CD4-positive, alpha-beta memory T cell (primary cell): ENCODE measurements at regions of chr1 and their contacts with region 1.

Region 1: DNA sequence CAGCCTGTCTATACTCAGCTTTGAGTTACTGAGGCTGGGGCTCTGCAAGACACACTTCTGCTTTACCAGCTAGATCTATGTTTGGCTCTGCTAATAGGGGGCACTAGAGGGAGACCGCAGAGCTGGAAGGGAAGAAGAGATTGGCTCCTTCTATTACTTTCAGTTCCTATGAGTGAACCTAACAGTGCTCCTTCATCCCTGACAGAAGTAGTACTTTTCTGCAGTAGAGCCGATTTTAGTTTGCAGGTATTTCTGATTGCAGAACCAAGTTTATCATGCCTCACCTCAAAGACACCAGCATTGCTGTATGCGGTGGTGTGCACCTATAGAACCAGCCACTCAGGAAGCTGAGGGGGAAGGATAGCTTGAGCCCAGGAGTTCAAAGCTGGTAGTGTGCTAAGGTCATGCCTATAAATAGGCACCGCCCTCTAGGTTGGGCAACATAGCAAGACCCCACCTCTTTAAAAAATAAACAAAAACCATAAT is 5.7 kb upstream of the ZDHHC18 start:
- DNase-seq: peak; percentile 53 to 60 (median 57)
- H3K4me3 ChIP-seq: peak overlapping the region in 1 of 2 donors; percentile 42
- H3K4me3 Mint-ChIP-seq: peak overlapping the region; percentile 79 to 87 (median 84)
- H3K27ac ChIP-seq: peak overlapping the region; percentile 43
- H3K27ac Mint-ChIP-seq: peak overlapping the region; percentile 87 to 94 (median 92)
- H3K4me1 ChIP-seq: peaks cover 25% of the 10 kb centered on the region
- H3K4me1 Mint-ChIP-seq: peaks cover 15 to 36% (median 27%) of the 10 kb centered on the region in 4 donors
- H3K27me3 ChIP-seq: no peaks in the 10 kb centered on the region
- H3K27me3 Mint-ChIP-seq: no peaks in the 10 kb centered on the region

Region 2: GRCh38 chr1:26677306-26678115 is 143.3 kb before region 1 on chr1:
- CTCF ChIA-PET with region 1: no interaction called
- POLR2A ChIA-PET with region 1: no interaction called
- intact Hi-C with region 1: no loop called
- DNase-seq: peak; percentile 48 to 68 (median 54)
- H3K4me3 ChIP-seq: no peak overlapping the region
- H3K4me3 Mint-ChIP-seq: peak overlapping the region in 7 of 8 donors; percentile 36 to 82 (median 77)
- H3K27ac ChIP-seq: peak overlapping the region; percentile 5
- H3K27ac Mint-ChIP-seq: peak overlapping the region; percentile 24 to 89 (median 74)
- H3K4me1 ChIP-seq: peaks cover 20% of the 10 kb centered on the region
- H3K4me1 Mint-ChIP-seq: peaks cover 11 to 23% (median 14%) of the 10 kb centered on the region in 4 donors
- H3K27me3 ChIP-seq: no peaks in the 10 kb centered on the region
- H3K27me3 Mint-ChIP-seq: no peaks in the 10 kb centered on the region

Region 3: GRCh38 chr1:26733982-26734381 is 86.8 kb before region 1 on chr1:
- CTCF ChIA-PET with region 1: no interaction called
- POLR2A ChIA-PET with region 1: no interaction called
- intact Hi-C with region 1: no loop called
- DNase-seq: peak; percentile 15 to 52 (median 21)
- H3K4me3 ChIP-seq: no peak overlapping the region
- H3K4me3 Mint-ChIP-seq: peak overlapping the region in 6 of 8 donors; percentile 26 to 77 (median 56)
- H3K27ac ChIP-seq: peak overlapping the region; percentile 16
- H3K27ac Mint-ChIP-seq: peak overlapping the region; percentile 74 to 87 (median 80)
- H3K4me1 ChIP-seq: peaks cover 45% of the 10 kb centered on the region
- H3K4me1 Mint-ChIP-seq: peaks cover 33 to 61% (median 49%) of the 10 kb centered on the region in 4 donors
- H3K27me3 ChIP-seq: no peaks in the 10 kb centered on the region
- H3K27me3 Mint-ChIP-seq: no peaks in the 10 kb centered on the region

Region 4: GRCh38 chr1:26833432-26834405 is 12.9 kb after region 1 on chr1:
- CTCF ChIA-PET with region 1: interaction called, 184 read pairs
- POLR2A ChIA-PET with region 1: interaction called, 55 read pairs
- intact Hi-C with region 1: loop called (anchors 1 kb)
- DNase-seq: peak; percentile 89 to 98 (median 94)
- H3K4me3 ChIP-seq: peak overlapping the region in 1 of 2 donors; percentile 23
- H3K4me3 Mint-ChIP-seq: peak overlapping the region; percentile 74 to 92 (median 85)
- H3K27ac ChIP-seq: peak overlapping the region; percentile 97
- H3K27ac Mint-ChIP-seq: peak overlapping the region; percentile 98 to 100 (median 100)
- H3K4me1 ChIP-seq: peaks cover 74% of the 10 kb centered on the region
- H3K4me1 Mint-ChIP-seq: peaks cover 60 to 87% (median 73%) of the 10 kb centered on the region in 4 donors
- H3K27me3 ChIP-seq: no peaks in the 10 kb centered on the region
- H3K27me3 Mint-ChIP-seq: no peaks in the 10 kb centered on the region

Region 5: DNA sequence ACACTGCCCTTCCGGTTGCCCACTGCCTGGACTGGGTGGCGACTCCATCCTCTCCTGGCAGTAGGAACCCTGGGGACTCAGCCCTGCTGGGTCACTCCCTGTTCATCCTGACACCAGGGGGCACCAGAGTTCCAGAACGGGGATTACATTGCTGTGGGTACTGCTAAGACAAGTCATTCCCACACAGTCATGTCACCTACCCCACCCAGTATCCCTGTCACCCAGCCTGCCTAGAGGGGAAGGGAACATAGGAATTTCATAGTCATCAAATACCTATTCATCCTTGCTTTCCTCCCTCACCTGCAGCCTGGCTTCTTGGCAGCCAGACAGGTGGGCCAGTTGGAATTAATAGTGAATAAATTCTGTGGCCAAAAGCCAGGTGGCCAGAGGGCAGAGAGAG is 32.3 kb after region 1 on chr1:
- CTCF ChIA-PET with region 1: interaction called, 11 read pairs
- POLR2A ChIA-PET with region 1: no interaction called
- intact Hi-C with region 1: no loop called
- DNase-seq: peak; percentile 64 to 75 (median 69)
- H3K4me3 ChIP-seq: no peak overlapping the region
- H3K4me3 Mint-ChIP-seq: no peak overlapping the region
- H3K27ac ChIP-seq: no peak overlapping the region
- H3K27ac Mint-ChIP-seq: peak overlapping the region in 2 of 7 donors; percentile 11 to 52
- H3K4me1 ChIP-seq: no peaks in the 10 kb centered on the region
- H3K4me1 Mint-ChIP-seq: peaks cover 1 to 9% (median 4%) of the 10 kb centered on the region in 4 donors
- H3K27me3 ChIP-seq: no peaks in the 10 kb centered on the region
- H3K27me3 Mint-ChIP-seq: no peaks in the 10 kb centered on the region

Region 6: GRCh38 chr1:26877326-26877725 is 56.5 kb after region 1 on chr1:
- CTCF ChIA-PET with region 1: interaction called, 10 read pairs
- POLR2A ChIA-PET with region 1: no interaction called
- intact Hi-C with region 1: no loop called
- DNase-seq: no peak
- H3K4me3 ChIP-seq: no peak overlapping the region
- H3K4me3 Mint-ChIP-seq: no peak overlapping the region
- H3K27ac ChIP-seq: no peak overlapping the region
- H3K27ac Mint-ChIP-seq: no peak overlapping the region
- H3K4me1 ChIP-seq: no peaks in the 10 kb centered on the region
- H3K4me1 Mint-ChIP-seq: peaks cover 0 to 1% (median under 1%) of the 10 kb centered on the region in 4 donors
- H3K27me3 ChIP-seq: no peaks in the 10 kb centered on the region
- H3K27me3 Mint-ChIP-seq: no peaks in the 10 kb centered on the region

Region 7: GRCh38 chr1:26900001-26900814 is 79.4 kb after region 1 on chr1 and contains the start of gene GPATCH3:
- CTCF ChIA-PET with region 1: interaction called, 5 read pairs
- POLR2A ChIA-PET with region 1: interaction called, 10 read pairs
- intact Hi-C with region 1: no loop called
- DNase-seq: peak; percentile 87 to 89 (median 88)
- H3K4me3 ChIP-seq: peak within 1 kb of the TSS; percentile 86 to 93
- H3K4me3 Mint-ChIP-seq: peak within 1 kb of the TSS; percentile 87 to 100 (median 96)
- H3K27ac ChIP-seq: peak within 1 kb of the TSS; percentile 90
- H3K27ac Mint-ChIP-seq: peak within 1 kb of the TSS; percentile 92 to 100 (median 98)
- H3K4me1 ChIP-seq: peaks cover 25% of the 10 kb centered on the region
- H3K4me1 Mint-ChIP-seq: peaks cover 21 to 48% (median 26%) of the 10 kb centered on the region in 4 donors
- H3K27me3 ChIP-seq: no peaks in the 10 kb centered on the region
- H3K27me3 Mint-ChIP-seq: no peaks in the 10 kb centered on the region
- total RNA-seq, gene GPATCH3: 25.0 to 26.7 TPM

Region 8: DNA sequence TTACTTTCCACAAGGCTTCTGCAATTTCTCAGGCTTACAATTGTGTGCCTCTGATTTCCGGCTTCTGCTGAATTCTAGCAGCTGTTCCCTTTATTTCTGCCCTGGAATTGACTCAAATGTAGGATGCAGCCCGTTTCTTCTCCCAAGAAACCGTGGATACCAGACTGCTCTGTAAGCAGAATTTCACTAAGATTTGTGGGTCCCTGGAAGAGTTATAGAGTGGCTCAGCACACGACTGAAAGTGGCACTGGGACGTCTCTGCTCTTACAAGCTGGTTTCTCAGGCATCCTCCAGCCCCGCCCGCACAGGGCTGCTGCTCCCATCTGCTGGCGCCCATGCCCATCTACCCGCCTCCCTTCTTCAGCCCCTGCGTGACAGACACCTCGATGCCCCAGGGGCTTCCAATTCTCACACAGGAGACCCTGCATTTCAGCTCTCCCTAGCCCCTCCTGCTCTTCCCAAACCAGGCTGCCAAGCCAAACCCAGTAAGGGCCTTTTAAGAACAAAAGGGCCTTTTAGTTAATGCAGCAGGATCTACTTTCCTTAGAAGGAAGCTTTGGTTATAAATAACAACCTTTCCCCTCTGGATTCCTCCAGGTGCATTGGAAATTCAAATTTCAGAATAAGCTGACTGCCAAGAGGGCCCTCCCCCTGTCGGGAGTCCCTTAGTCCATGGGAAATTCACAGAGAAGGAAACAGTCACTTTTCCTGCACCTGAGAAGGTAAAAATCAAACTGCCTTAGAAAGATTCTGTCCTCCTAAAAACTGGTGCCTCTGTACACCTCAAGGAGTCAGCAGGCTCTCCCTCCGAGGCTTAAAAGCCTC is 237.2 kb after region 1 on chr1:
- CTCF ChIA-PET with region 1: no interaction called
- POLR2A ChIA-PET with region 1: no interaction called
- intact Hi-C with region 1: no loop called
- DNase-seq: no peak
- H3K4me3 ChIP-seq: no peak overlapping the region
- H3K4me3 Mint-ChIP-seq: no peak overlapping the region
- H3K27ac ChIP-seq: no peak overlapping the region
- H3K27ac Mint-ChIP-seq: no peak overlapping the region
- H3K4me1 ChIP-seq: no peaks in the 10 kb centered on the region
- H3K4me1 Mint-ChIP-seq: no peaks in the 10 kb centered on the region
- H3K27me3 ChIP-seq: no peaks in the 10 kb centered on the region
- H3K27me3 Mint-ChIP-seq: no peaks in the 10 kb centered on the region